Adrenal gland (tissue), 19 donors: ENCODE measurements at regions of chr11 and their contacts with region 1.

Region 1: GRCh38 chr11:126480410-126481302 is 125.2 kb downstream of the ST3GAL4 start:
- DNase-seq: peak; percentile 80 to 97 (median 91)
- H3K4me3 ChIP-seq: no peak overlapping the region
- H3K27ac ChIP-seq: peak overlapping the region in 2 of 5 donors; percentile 66 to 68
- H3K4me1 ChIP-seq: peaks cover 6% of the 10 kb centered on the region in 2 donors
- H3K27me3 ChIP-seq: no peaks in the 10 kb centered on the region
- CTCF ChIP-seq: peak; percentile 93 to 99 (median 96)
- POLR2A ChIP-seq: peak in 1 of 2 donors; percentile 18

Region 2: DNA sequence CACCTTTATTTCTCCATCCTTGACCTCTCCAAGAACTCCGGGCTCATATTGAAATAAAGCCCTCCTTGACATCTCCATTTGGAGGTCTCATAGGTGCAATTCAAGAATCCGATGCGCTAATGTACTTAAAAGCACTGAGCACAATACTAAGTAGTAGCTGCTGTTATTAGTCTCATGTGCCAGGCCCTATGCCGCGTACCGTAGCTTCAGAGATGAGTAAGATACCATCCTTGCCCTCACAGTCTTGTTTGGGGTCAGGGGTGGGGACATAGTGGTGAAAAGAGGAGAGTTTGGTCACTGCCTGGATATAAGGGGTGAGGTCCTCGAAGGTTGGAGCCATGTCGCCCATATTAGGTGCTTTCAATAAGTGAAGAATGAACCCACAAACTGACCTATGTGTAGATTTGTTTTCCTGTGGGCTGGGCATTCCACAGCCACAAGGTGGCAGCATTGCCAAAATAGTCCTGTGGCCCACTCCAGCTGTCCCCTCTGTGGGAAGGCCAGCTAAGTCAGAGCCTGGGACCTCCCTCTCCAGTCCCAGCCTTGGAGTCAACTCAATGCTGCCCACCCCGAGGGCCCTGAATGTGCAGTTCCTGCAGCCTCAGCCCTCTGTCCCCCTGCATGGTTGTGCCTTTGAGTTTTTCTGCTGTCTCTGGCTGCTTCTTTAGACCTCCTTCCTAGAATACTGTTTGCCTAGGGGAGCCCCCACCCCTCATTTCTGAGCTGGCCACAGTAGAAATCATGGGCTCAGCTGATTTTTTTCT is 170.2 kb before region 1 on chr11:
- intact Hi-C with region 1: loop called (anchors 5 kb)
- DNase-seq: peak; percentile 74 to 93 (median 85)
- H3K4me3 ChIP-seq: no peak overlapping the region
- H3K27ac ChIP-seq: peak overlapping the region in 1 of 5 donors; percentile 23
- H3K4me1 ChIP-seq: peaks cover 5 to 17% of the 10 kb centered on the region in 2 donors
- H3K27me3 ChIP-seq: no peaks in the 10 kb centered on the region
- CTCF ChIP-seq: peak; percentile 65 to 91 (median 88)
- POLR2A ChIP-seq: no peak

Region 3: GRCh38 chr11:126800009-126800408 is 319.4 kb after region 1 on chr11:
- intact Hi-C with region 1: no loop called
- DNase-seq: no peak
- H3K4me3 ChIP-seq: no peak overlapping the region
- H3K27ac ChIP-seq: no peak overlapping the region
- H3K4me1 ChIP-seq: no peaks in the 10 kb centered on the region
- H3K27me3 ChIP-seq: no peaks in the 10 kb centered on the region
- CTCF ChIP-seq: no peak
- POLR2A ChIP-seq: no peak